ENCODE measurements at regions of chr4 and their contacts with region 1.

Region 1: GRCh38 chr4:176340871-176341685 is 21.3 kb downstream of the SPCS3 start:
- DNase-seq: no peak
- ATAC-seq: peak; percentile 67 to 93 (median 87)
- H3K4me3 ChIP-seq: no peak overlapping the region
- H3K27ac ChIP-seq: no peak overlapping the region
- H3K4me1 ChIP-seq: peaks cover 0 to 4% (median 0%) of the 10 kb centered on the region in 3 donors
- H3K27me3 ChIP-seq: no peaks in the 10 kb centered on the region
- CTCF ChIP-seq: peak in 3 of 4 donors; percentile 22 to 42 (median 34)

Region 2: DNA sequence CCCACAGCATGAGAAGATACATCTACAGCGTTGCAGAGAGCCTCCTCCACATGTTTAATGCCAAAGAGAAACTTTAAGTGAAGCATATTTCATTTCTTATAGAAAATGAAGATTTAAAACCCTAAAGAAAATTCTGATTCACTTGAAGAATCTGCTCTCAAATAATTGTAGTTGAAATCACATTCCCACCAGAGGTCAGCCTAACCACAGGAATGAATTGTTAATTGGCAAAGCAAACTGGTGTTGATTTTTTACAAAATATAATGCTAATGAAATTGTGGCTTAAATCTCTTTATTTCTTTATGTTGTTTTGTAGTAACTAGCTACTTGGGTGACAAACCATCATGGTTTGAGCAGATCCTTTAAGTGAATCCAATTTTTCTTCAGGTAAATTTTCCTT is 306.6 kb before region 1 on chr4:
- intact Hi-C with region 1: loop called in 1 of 3 experiments (anchors 10 kb)
- DNase-seq: no peak
- ATAC-seq: peak in 3 of 4 donors; percentile 37 to 62 (median 47)
- H3K4me3 ChIP-seq: no peak overlapping the region
- H3K27ac ChIP-seq: no peak overlapping the region
- H3K4me1 ChIP-seq: no peaks in the 10 kb centered on the region
- H3K27me3 ChIP-seq: no peaks in the 10 kb centered on the region
- CTCF ChIP-seq: no peak

Region 3: DNA sequence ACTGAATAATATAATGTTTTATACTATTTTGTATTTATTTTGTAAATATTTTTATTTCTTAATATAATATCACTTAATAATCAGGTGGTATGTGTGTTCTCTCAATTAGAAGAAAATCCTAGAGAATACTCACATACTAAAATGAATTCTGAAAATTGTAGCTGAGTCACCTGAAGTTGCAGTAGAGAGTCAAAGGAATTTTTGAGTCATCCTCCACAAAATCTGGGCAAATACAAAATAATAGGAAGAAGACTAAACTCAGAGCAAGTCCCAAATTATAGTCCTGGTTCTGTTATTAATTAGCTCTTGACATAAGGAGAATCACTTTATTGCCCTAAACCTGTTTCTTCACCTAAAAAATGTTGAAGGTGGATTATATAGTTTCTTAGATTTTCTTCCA is 203.4 kb before region 1 on chr4:
- intact Hi-C with region 1: no loop called
- DNase-seq: no peak
- ATAC-seq: no peak
- H3K4me3 ChIP-seq: no peak overlapping the region
- H3K27ac ChIP-seq: no peak overlapping the region
- H3K4me1 ChIP-seq: no peaks in the 10 kb centered on the region
- H3K27me3 ChIP-seq: no peaks in the 10 kb centered on the region
- CTCF ChIP-seq: no peak

Region 4: GRCh38 chr4:176241703-176242102 is 99.4 kb before region 1 on chr4:
- intact Hi-C with region 1: no loop called
- DNase-seq: no peak
- ATAC-seq: no peak
- H3K4me3 ChIP-seq: no peak overlapping the region
- H3K27ac ChIP-seq: no peak overlapping the region
- H3K4me1 ChIP-seq: no peaks in the 10 kb centered on the region
- H3K27me3 ChIP-seq: no peaks in the 10 kb centered on the region
- CTCF ChIP-seq: no peak

Region 5: DNA sequence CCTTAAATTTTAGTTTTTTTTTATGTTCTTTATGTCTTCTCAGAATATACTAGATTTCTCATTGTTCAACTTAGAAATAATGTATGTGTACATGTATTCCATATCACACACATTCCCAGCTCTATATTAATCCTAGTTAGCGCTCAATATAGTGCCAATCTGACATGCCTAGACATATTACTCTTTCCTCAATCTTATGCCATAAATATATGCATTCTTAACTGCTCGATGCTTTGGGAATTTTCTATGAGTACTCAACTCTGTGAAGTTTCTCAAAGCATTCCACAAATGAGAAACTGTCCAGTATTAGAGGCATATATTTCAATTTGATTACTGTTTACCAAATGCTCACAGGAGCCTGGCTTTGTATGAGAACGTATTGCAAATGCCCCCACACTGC is 682.9 kb after region 1 on chr4:
- intact Hi-C with region 1: no loop called
- DNase-seq: no peak
- ATAC-seq: no peak
- H3K4me3 ChIP-seq: no peak overlapping the region
- H3K27ac ChIP-seq: no peak overlapping the region
- H3K4me1 ChIP-seq: no peaks in the 10 kb centered on the region
- H3K27me3 ChIP-seq: no peaks in the 10 kb centered on the region
- CTCF ChIP-seq: no peak